Stomach (tissue), 19 donors: ENCODE measurements at regions of chr5 and their contacts with region 1.

Region 1: GRCh38 chr5:142922223-142922952 is 152.2 kb downstream of the ARHGAP26 start:
- DNase-seq: peak in 1 of 2 donors; percentile 75
- H3K4me3 ChIP-seq: no peak overlapping the region
- H3K27ac ChIP-seq: no peak overlapping the region
- H3K4me1 ChIP-seq: peaks cover 0 to 35% (median 12%) of the 10 kb centered on the region in 4 donors
- H3K27me3 ChIP-seq: no peaks in the 10 kb centered on the region
- CTCF ChIP-seq: peak in 3 of 7 experiments; percentile 29 to 45 (median 43)
- EP300 ChIP-seq: no peak
- POLR2A ChIP-seq: no peak

Region 2: GRCh38 chr5:142703153-142703552 is 219.2 kb before region 1 on chr5:
- intact Hi-C with region 1: no loop called
- DNase-seq: no peak
- H3K4me3 ChIP-seq: no peak overlapping the region
- H3K27ac ChIP-seq: no peak overlapping the region
- H3K4me1 ChIP-seq: peaks cover 0 to 12% (median 10%) of the 10 kb centered on the region in 4 donors
- H3K27me3 ChIP-seq: no peaks in the 10 kb centered on the region
- CTCF ChIP-seq: no peak
- EP300 ChIP-seq: no peak
- POLR2A ChIP-seq: no peak

Region 3: GRCh38 chr5:142713121-142713706 is 209.2 kb before region 1 on chr5:
- intact Hi-C with region 1: no loop called
- DNase-seq: peak; percentile 89 to 96
- H3K4me3 ChIP-seq: peak overlapping the region; percentile 42 to 57 (median 46)
- H3K27ac ChIP-seq: peak overlapping the region; percentile 71 to 87 (median 79)
- H3K4me1 ChIP-seq: peaks cover 8 to 23% (median 12%) of the 10 kb centered on the region in 4 donors
- H3K27me3 ChIP-seq: no peaks in the 10 kb centered on the region
- CTCF ChIP-seq: peak in 6 of 7 experiments; percentile 7 to 97 (median 93)
- EP300 ChIP-seq: no peak
- POLR2A ChIP-seq: no peak

Region 4: DNA sequence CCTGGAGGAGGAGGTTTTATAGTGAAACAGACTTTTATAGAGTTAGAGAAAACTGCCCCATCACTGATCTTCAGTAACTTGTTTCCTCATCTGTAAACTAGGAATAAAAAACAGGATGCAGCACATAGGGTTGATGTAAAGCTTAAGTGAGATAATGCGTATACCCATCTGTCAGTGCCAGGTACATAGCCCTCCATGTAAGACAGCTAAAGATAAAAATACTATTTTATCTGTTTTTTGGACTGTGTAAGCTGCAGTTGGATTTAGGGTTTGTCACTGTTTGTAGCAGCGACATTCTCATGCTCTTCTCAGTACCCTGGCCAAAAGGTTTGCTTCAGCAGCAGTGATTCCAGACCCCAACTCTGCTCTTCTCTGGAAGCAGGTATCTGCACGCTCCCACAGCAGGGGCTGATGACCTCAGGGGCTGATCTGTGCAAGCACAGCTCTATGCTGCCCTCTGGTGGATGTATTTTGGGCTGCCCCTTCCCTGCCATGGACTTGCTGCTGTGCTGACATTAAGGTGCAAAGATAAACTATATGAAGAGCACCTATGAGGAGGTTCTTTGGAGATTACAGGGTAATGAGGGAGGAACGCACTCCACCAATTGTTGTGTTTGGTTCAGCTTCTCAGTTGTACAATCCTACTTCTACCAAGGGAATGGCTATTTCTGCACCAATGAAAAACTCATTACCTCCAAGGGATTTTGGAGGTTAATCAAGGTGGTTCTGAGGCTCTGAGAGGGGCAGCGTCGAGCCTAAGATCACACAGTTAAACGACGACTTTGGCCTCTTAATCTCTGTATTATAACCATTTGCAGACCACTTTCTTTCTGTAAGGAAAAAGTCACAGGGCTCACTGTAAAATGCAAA is 902.7 kb after region 1 on chr5:
- intact Hi-C with region 1: loop called (anchors 5 kb)
- DNase-seq: peak; percentile 87 to 92
- H3K4me3 ChIP-seq: no peak overlapping the region
- H3K27ac ChIP-seq: no peak overlapping the region
- H3K4me1 ChIP-seq: peaks cover 0 to 5% (median 2%) of the 10 kb centered on the region in 4 donors
- H3K27me3 ChIP-seq: no peaks in the 10 kb centered on the region
- CTCF ChIP-seq: peak in 6 of 7 experiments; percentile 57 to 96 (median 89)
- EP300 ChIP-seq: no peak
- POLR2A ChIP-seq: no peak